Right ventricle myocardium inferior (tissue), 1 donor: ENCODE measurements at regions of chr1 and their contacts with region 1.

Region 1: GRCh38 chr1:228378090-228378872 is 28.4 kb downstream of the TRIM11 start:
- DNase-seq: peak; percentile 88
- ATAC-seq: peak; percentile 62

Region 2: DNA sequence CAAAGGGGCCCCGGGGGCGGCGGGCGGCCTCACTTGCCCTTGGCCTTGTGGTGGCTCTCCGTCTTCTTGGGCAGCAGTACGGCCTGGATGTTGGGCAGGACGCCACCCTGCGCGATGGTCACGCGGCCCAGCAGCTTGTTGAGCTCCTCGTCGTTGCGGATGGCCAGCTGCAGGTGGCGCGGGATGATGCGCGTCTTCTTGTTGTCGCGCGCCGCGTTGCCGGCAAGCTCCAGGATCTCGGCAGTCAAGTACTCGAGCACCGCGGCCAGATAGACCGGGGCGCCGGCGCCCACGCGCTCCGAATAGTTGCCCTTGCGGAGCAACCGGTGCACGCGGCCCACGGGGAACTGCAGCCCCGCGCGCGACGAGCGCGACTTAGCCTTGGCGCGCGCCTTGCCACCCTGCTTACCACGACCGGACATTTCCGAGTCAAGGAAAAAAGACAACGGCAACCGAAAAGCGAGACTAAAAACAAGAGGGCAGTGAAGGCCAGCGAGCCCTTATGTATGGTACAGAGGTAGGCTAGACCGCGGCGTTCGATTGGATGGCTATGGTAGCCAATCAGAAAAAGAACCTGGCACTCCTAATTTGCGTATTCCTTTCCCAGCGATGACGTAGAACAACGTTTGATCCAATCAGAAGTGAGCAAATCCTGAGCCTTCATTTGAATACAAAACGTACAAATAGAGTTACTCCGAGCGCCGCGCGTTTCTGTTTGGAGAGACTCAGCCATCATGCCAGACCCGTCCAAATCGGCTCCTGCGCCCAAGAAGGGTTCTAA is 79.3 kb after region 1 on chr1:
- intact Hi-C with region 1: loop called (anchors 5 kb)
- DNase-seq: peak; percentile 90
- ATAC-seq: peak; percentile 97

Region 3: GRCh38 chr1:228486596-228487335 is 108.5 kb after region 1 on chr1:
- intact Hi-C with region 1: loop called (anchors 10 kb)
- DNase-seq: peak; percentile 92
- ATAC-seq: peak; percentile 79

Region 4: DNA sequence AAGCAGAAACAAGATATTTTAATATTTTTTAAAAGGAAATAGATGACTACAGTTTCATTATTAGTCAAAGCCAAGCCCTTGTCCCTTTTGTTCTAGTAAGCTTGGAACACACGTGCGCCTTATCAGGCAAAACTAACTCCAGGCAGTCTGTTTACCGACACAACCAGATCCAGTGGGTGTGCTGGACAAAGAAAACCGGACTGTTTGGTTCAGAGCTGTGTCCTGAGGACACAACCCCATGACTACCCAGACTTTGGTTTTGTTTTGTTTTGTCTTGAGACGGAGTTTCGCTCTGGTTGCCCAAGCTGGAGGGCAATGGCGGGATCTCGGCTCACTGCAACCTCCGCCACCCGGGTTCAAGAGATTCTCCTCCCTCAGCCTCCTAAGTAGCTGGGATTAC is 343.1 kb after region 1 on chr1:
- intact Hi-C with region 1: no loop called
- DNase-seq: no peak
- ATAC-seq: no peak